Activated CD4-positive, alpha-beta memory T cell treated with anti-CD3 and anti-CD28 coated beads for 36 hours (primary cell): ENCODE measurements at regions of chr15 and their contacts with region 1.

Region 1: GRCh38 chr15:63466378-63467192 is 37.8 kb upstream of the USP3 start:
- DNase-seq: peak; percentile 46
- H3K4me3 Mint-ChIP-seq: no peak overlapping the region
- H3K27ac Mint-ChIP-seq: peak overlapping the region; percentile 35
- H3K4me1 Mint-ChIP-seq: peaks cover 23% of the 10 kb centered on the region
- H3K27me3 Mint-ChIP-seq: no peaks in the 10 kb centered on the region

Region 2: GRCh38 chr15:63362196-63362595 is 104.4 kb before region 1 on chr15:
- CTCF ChIA-PET with region 1: no interaction called
- POLR2A ChIA-PET with region 1: no interaction called
- intact Hi-C with region 1: no loop called
- DNase-seq: no peak
- H3K4me3 Mint-ChIP-seq: no peak overlapping the region
- H3K27ac Mint-ChIP-seq: no peak overlapping the region
- H3K4me1 Mint-ChIP-seq: no peaks in the 10 kb centered on the region
- H3K27me3 Mint-ChIP-seq: peaks cover 11% of the 10 kb centered on the region

Region 3: DNA sequence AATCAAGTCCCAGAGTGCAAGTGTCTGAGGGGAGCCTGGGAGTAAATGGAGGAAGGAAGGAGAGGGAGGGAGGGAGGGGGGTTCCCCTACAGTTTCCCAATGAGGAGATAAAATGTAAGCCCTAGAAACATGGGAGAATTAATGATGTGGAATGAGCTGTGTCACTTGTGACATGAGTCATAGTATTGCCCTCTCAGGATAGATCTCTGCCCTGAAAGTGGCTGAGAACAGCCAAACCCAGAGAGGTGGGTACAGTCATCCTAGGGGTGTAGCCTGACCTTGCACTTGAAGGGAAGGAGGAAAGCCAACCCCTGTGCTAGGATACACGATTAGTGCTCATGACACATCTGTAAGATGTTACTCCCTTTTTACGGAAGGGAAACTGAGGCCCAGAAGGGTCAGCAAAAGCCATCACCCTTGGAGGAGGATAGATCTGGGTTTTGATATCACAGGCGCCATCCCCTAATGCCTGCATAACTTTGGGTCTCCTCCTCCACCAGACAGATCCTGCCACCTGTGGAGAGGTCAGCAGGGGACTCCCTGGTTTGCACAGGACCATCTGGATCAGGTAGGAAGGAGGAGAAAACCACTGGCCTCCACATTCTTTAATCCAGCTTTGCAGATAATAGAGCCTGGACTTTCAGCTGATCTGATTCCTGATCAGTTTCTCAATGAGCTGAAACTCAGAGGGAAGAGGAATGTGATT is 14.7 kb after region 1 on chr15:
- CTCF ChIA-PET with region 1: interaction called, 22 read pairs
- POLR2A ChIA-PET with region 1: interaction called, 3 read pairs
- intact Hi-C with region 1: loop called (anchors 1 kb)
- DNase-seq: peak; percentile 73
- H3K4me3 Mint-ChIP-seq: no peak overlapping the region
- H3K27ac Mint-ChIP-seq: peak overlapping the region; percentile 85
- H3K4me1 Mint-ChIP-seq: peaks cover 80% of the 10 kb centered on the region
- H3K27me3 Mint-ChIP-seq: no peaks in the 10 kb centered on the region

Region 4: DNA sequence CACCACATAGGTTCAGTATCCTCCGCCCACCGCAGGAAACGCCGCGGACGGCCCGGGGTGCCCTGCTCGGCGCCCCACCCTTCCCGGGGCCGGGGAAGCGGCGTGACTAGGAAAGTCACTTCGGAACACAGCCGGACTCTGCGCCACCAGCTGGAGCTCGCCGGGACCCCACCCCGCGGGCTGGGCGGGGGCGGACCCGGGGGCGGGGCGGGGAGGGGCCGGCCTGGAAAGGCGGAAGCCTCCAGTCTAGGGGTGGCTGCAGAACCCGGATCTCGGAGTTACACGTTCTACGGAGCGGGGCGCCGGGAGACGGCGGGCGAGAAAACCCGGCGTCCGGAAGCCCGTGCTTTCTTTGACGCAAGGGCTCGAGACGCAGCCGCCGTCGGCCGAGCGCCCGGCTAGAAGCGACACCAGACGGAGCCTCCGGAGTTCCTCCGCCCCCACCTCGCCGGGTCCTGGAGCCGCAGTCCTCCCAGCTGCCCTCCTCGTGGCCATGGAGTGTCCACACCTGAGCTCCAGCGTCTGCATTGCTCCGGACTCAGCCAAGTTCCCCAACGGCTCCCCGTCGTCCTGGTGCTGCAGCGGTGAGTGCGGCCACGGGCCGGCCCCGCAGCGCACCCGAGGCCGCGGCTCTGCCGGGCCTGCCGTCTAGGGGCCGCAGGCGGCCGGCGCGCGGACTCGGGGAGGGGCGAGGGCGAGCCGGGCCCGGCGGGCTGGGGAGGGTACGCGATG is 37.8 kb after region 1 on chr15 and contains the start of gene USP3:
- CTCF ChIA-PET with region 1: interaction called, 12 read pairs
- POLR2A ChIA-PET with region 1: interaction called, 3 read pairs
- intact Hi-C with region 1: loop called (anchors 1 kb)
- DNase-seq: peak; percentile 95
- H3K4me3 Mint-ChIP-seq: peak within 1 kb of the TSS; percentile 90
- H3K27ac Mint-ChIP-seq: peak within 1 kb of the TSS; percentile 99
- H3K4me1 Mint-ChIP-seq: peaks cover 80% of the 10 kb centered on the region
- H3K27me3 Mint-ChIP-seq: no peaks in the 10 kb centered on the region
- total RNA-seq, gene USP3: 46.1 to 48.9 TPM

Region 5: GRCh38 chr15:63539521-63539920 is 72.9 kb after region 1 on chr15:
- CTCF ChIA-PET with region 1: interaction called, 10 read pairs
- POLR2A ChIA-PET with region 1: no interaction called
- intact Hi-C with region 1: no loop called
- DNase-seq: no peak
- H3K4me3 Mint-ChIP-seq: no peak overlapping the region
- H3K27ac Mint-ChIP-seq: no peak overlapping the region
- H3K4me1 Mint-ChIP-seq: peaks cover 56% of the 10 kb centered on the region
- H3K27me3 Mint-ChIP-seq: no peaks in the 10 kb centered on the region

Region 6: GRCh38 chr15:63610200-63610841 is 143.7 kb after region 1 on chr15:
- CTCF ChIA-PET with region 1: interaction called, 69 read pairs
- POLR2A ChIA-PET with region 1: interaction called, 4 read pairs
- intact Hi-C with region 1: no loop called
- DNase-seq: peak; percentile 89
- H3K4me3 Mint-ChIP-seq: no peak overlapping the region
- H3K27ac Mint-ChIP-seq: peak overlapping the region; percentile 86
- H3K4me1 Mint-ChIP-seq: peaks cover 31% of the 10 kb centered on the region
- H3K27me3 Mint-ChIP-seq: no peaks in the 10 kb centered on the region

Region 7: GRCh38 chr15:63708126-63708772 is 241.7 kb after region 1 on chr15:
- CTCF ChIA-PET with region 1: no interaction called
- POLR2A ChIA-PET with region 1: no interaction called
- intact Hi-C with region 1: no loop called
- DNase-seq: no peak
- H3K4me3 Mint-ChIP-seq: no peak overlapping the region
- H3K27ac Mint-ChIP-seq: peak overlapping the region; percentile 61
- H3K4me1 Mint-ChIP-seq: peaks cover 22% of the 10 kb centered on the region
- H3K27me3 Mint-ChIP-seq: no peaks in the 10 kb centered on the region